HCT116 (cell line): ENCODE measurements at regions of chr9 and their contacts with region 1.

Region 1: DNA sequence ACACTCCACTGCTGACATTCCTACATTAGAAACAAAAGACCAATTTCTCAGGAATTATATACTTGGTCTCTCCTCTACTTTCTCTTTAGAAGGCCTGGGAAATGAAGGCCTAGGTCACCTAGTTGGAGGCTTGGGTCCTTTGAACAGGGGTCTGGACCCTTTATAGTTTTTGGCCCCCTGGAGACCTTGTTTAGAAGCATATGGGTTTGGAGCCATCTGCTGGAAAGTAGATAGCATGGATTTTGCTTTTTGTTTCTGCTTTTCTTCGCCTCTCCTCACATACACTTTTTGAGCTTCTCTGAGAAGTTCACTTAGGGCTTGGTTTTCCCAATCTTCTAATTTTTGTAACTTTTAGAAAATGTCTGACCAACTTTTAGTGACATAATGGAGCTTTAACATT is 67.1 kb upstream of the CDK20 start:
- DNase-seq: no peak
- ATAC-seq: no peak
- H3K4me3 ChIP-seq: no peak overlapping the region
- H3K27ac ChIP-seq: no peak overlapping the region
- H3K4me1 ChIP-seq: no peaks in the 10 kb centered on the region
- H3K27me3 ChIP-seq: no peaks in the 10 kb centered on the region
- CTCF ChIP-seq: peak; percentile 46 to 52 (median 50); a peak in 4 of 6 replicates
- POLR2A ChIP-seq: no peak
- RAD21 ChIP-seq: peak; percentile 76

Region 2: DNA sequence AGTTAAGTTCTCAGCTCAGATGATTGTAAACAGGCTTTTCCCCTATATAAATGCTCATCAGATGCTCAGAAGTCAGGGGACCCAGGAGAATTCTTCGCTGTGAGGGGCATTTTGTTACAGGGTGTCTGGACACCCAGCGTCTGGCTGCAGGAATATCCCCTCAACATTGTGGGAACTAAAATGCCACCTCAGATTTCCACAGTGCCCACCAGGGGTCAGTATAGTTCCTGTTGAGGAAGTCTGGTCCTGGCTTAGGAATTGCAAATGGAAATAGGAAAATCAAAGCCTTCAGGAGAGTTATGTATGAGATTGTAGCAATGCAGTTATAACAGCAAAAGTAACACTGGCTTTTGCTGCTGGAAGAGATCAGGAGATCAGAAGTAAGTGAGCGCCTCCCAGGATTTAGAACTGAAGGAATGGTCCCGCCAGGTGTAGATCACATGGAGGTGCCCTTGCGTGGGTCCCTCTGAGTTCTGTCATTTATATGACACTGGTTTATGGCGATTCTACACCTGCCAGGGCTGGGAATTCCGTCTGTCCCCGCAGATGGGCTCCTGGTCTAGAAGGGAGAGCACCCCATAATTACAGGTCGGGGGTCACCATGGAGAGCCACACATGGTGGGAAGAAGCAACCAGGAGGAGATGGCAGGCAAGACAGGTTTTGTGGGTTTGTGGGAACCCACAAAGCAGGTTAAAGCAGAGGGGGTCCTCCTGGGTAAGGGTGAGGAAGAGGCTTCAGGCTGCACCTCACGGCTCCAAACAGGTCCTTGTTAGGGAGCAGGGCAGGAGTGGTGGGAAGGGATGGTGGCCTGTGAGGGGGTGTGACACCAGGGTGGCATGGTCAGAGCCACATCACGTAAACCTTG is 362.6 kb before region 1 on chr9:
- CTCF ChIA-PET with region 1: no interaction called
- POLR2A ChIA-PET with region 1: no interaction called
- RAD21 ChIA-PET with region 1: no interaction called
- intact Hi-C with region 1: loop called (anchors 2 kb)
- DNase-seq: peak; percentile 55
- ATAC-seq: peak; percentile 91
- H3K4me3 ChIP-seq: no peak overlapping the region
- H3K27ac ChIP-seq: no peak overlapping the region
- H3K4me1 ChIP-seq: no peaks in the 10 kb centered on the region
- H3K27me3 ChIP-seq: no peaks in the 10 kb centered on the region
- CTCF ChIP-seq: peak; percentile 74 to 90 (median 76)
- POLR2A ChIP-seq: no peak
- RAD21 ChIP-seq: peak; percentile 85

Region 3: GRCh38 chr9:87816036-87816435 is 225.4 kb before region 1 on chr9:
- CTCF ChIA-PET with region 1: no interaction called
- POLR2A ChIA-PET with region 1: no interaction called
- RAD21 ChIA-PET with region 1: no interaction called
- intact Hi-C with region 1: no loop called
- DNase-seq: no peak
- ATAC-seq: no peak
- H3K4me3 ChIP-seq: no peak overlapping the region
- H3K27ac ChIP-seq: no peak overlapping the region
- H3K4me1 ChIP-seq: peaks cover 0 to 4% of the 10 kb centered on the region in 2 experiments; a peak in 1 of 4 replicates
- H3K27me3 ChIP-seq: no peaks in the 10 kb centered on the region
- CTCF ChIP-seq: no peak
- POLR2A ChIP-seq: no peak
- RAD21 ChIP-seq: no peak